Tibial artery (tissue), 4 donors: ENCODE measurements at regions of chr9 and their contacts with region 1.

Region 1: GRCh38 chr9:133144137-133144903 is 19.4 kb downstream of the GBGT1 start:
- DNase-seq: peak; percentile 73 to 79
- H3K4me3 ChIP-seq: peak overlapping the region; percentile 34 to 41
- H3K27ac ChIP-seq: no peak overlapping the region
- H3K4me1 ChIP-seq: peaks cover 3 to 48% (median 27%) of the 10 kb centered on the region in 4 donors
- H3K27me3 ChIP-seq: no peaks in the 10 kb centered on the region
- CTCF ChIP-seq: peak; percentile 96 to 98

Region 2: GRCh38 chr9:132970324-132971062 is 173.8 kb before region 1 on chr9:
- intact Hi-C with region 1: no loop called
- DNase-seq: no peak
- H3K4me3 ChIP-seq: no peak overlapping the region
- H3K27ac ChIP-seq: no peak overlapping the region
- H3K4me1 ChIP-seq: no peaks in the 10 kb centered on the region
- H3K27me3 ChIP-seq: peaks cover 0 to 59% of the 10 kb centered on the region in 2 donors
- CTCF ChIP-seq: no peak

Region 3: GRCh38 chr9:133103183-133103986 is 40.9 kb before region 1 on chr9:
- intact Hi-C with region 1: loop called (anchors 2 kb)
- DNase-seq: peak; percentile 57 to 78
- H3K4me3 ChIP-seq: no peak overlapping the region
- H3K27ac ChIP-seq: no peak overlapping the region
- H3K4me1 ChIP-seq: no peaks in the 10 kb centered on the region
- H3K27me3 ChIP-seq: no peaks in the 10 kb centered on the region
- CTCF ChIP-seq: peak; percentile 97